Lower leg skin (tissue), 4 donors: ENCODE measurements at regions of chr4 and their contacts with region 1.

Region 1: GRCh38 chr4:173505924-173506518 is 24.0 kb downstream of the HAND2 start:
- DNase-seq: peak in 1 of 2 donors; percentile 92
- H3K4me3 ChIP-seq: no peak overlapping the region
- CTCF ChIP-seq: no peak
- POLR2A ChIP-seq: no peak

Region 2: GRCh38 chr4:173415885-173416653 is 90.0 kb before region 1 on chr4:
- intact Hi-C with region 1: no loop called
- DNase-seq: peak; percentile 61 to 86
- H3K4me3 ChIP-seq: no peak overlapping the region
- CTCF ChIP-seq: no peak
- POLR2A ChIP-seq: no peak

Region 3: DNA sequence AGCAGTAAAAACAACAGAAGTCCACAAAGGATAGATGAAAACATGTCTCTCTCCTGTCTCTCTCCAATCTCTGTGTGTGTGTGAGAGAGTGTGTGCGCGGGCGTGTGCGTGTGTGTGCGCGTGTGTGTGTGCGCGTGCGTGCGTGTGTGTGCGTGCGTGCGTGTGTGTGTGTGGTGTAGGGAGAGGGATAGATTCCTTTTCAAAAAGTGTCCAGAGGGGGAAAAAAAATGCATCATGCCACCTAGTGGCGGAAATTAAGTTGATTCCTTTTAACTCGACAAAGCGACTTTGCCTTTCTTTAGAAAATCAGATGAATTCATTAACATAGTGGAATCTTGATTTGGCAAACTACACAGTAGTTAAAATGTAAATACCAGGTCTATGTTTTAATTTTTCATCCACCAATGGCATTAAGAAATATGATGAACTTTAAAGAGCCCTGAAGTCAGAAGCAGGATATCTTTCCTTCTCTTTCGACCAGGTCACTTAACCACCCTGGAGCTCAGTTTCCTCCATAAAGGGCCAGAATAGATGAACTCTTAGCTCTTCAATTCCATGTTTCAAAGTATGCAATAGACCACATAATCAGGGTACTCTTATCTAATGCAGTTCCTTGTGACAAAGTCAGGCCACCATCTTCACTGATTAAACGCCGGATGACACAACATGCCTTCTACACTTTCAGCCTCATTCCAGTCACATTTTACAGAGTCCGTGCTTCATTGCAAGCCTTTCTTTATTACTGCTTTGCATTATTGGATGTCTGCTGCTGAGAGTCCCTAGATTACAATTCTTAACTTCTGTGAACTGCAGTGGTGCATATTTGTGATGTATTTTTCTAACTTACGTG is 614.6 kb after region 1 on chr4:
- intact Hi-C with region 1: loop called (anchors 10 kb)
- DNase-seq: peak in 1 of 2 donors; percentile 34
- H3K4me3 ChIP-seq: no peak overlapping the region
- CTCF ChIP-seq: no peak
- POLR2A ChIP-seq: no peak